Pancreas (tissue), 10 donors: ENCODE measurements at regions of chr12 and their contacts with region 1.

Region 1: DNA sequence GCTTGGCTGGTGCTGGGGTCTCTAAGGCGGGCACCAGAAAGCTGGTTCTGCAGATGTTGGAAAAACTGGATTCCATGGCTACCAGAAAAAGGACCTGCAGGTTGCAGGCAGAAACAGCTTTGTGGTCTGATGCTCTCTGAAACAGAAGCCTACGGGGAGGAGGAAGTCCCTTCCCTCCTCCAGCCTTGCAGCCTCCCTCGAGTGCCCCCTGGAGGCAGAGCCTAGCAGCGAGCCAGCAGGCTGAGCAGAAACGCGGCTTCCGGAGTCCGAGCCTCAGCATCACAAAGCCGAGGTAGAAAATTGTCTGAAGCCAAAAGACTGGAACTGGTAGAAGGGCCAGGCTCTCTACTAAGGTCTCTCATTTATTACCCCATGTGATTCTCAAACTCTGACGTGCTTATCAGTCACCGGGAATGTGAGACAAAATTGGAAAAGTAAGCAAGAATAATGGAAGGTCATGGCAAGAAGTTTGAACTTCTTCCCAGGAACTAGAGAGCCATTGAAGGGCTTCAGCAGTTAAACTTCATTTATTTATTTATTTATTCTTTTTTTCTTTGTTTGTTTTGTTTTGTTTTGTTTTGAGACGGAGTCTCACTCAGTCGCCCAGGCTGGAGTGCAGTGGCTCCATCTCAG is 82.2 kb upstream of the CPSF6 start:
- DNase-seq: peak; percentile 81 to 97 (median 90)
- ATAC-seq: peak; percentile 85 to 98 (median 97)
- H3K4me3 ChIP-seq: no peak overlapping the region
- H3K27ac ChIP-seq: no peak overlapping the region
- H3K4me1 ChIP-seq: peaks cover 0 to 8% (median 0%) of the 10 kb centered on the region in 3 donors
- H3K27me3 ChIP-seq: no peaks in the 10 kb centered on the region
- CTCF ChIP-seq: peak; percentile 84 to 97 (median 91)

Region 2: DNA sequence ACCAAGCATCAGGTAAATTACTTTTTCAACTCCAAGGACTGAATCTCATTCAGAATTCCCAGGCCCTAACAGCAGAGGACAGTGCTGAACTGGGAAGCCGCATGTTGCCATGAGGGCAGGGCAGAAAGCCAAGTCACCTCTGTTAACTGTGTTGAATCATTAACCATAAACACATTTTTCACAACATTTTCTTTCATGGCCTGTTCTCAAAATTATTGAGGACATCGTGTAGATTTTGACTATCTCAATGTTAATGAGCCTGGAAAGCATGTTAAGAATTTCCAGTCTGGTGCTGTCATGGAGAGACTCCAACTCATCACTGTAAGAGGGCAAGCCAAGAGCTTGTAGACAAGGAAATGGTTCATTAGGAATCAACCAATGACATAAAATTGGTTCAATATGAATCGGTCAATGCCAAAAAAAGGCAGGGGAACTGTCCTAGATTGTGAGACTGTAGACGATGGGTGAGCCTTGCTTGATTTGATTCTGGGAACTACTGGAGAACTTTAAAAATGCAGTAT is 257.8 kb before region 1 on chr12:
- intact Hi-C with region 1: loop called in 1 of 3 experiments (anchors 10 kb)
- DNase-seq: peak; percentile 69 to 84 (median 79)
- ATAC-seq: peak; percentile 93 to 94 (median 94)
- H3K4me3 ChIP-seq: no peak overlapping the region
- H3K27ac ChIP-seq: peak overlapping the region in 2 of 4 donors; percentile 1 to 37
- H3K4me1 ChIP-seq: peaks cover 13 to 22% (median 18%) of the 10 kb centered on the region in 3 donors
- H3K27me3 ChIP-seq: no peaks in the 10 kb centered on the region
- CTCF ChIP-seq: peak in 3 of 4 donors; percentile 21 to 74 (median 61)

Region 3: DNA sequence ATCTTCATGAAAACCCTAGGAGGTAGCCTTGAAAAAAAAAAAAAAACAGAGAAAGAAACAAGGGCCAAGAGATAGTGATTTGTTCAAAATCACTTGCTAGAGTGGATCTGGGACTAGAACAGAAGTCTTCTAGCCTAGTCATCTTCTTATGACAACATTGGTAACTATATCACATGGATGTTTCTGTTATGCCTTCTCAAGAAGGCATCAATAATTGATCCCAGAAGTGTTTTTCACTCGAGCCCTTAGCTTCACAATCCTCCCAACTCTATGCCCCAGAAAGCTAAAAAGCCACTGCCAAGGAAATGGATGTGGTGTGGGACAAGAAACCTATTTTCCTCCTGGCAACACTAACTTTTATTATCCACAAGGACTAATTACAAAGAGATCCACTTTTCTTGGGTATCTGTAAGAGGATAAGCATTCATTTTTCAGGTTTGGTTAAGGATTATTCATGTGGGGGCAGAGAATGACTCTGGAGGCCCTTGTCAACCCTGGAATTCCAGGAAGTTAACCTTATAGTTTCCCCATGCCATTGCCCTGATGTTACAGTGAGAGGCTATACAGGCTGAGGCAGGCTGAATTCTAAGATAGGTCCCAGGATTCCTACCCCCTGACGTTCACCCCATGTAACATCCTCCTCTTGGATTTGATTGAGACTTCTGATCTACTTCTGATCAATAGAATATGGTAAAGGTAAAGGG is 156.4 kb before region 1 on chr12:
- intact Hi-C with region 1: no loop called
- DNase-seq: no peak
- ATAC-seq: no peak
- H3K4me3 ChIP-seq: no peak overlapping the region
- H3K27ac ChIP-seq: no peak overlapping the region
- H3K4me1 ChIP-seq: no peaks in the 10 kb centered on the region
- H3K27me3 ChIP-seq: no peaks in the 10 kb centered on the region
- CTCF ChIP-seq: no peak

Region 4: GRCh38 chr12:69239352-69239921 is 82.3 kb after region 1 on chr12 and contains the start of gene CPSF6:
- intact Hi-C with region 1: no loop called
- DNase-seq: peak; percentile 95 to 98 (median 97)
- ATAC-seq: peak; percentile 98 to 99 (median 98)
- H3K4me3 ChIP-seq: peak within 1 kb of the TSS; percentile 60 to 96 (median 83)
- H3K27ac ChIP-seq: peak within 1 kb of the TSS; percentile 82 to 95 (median 90)
- H3K4me1 ChIP-seq: peaks cover 6 to 26% (median 22%) of the 10 kb centered on the region in 3 donors
- H3K27me3 ChIP-seq: no peaks in the 10 kb centered on the region
- CTCF ChIP-seq: no peak
- total RNA-seq, gene CPSF6: 20.4 to 34.2 (median 28.8) TPM

Region 5: GRCh38 chr12:69254046-69254445 is 96.9 kb after region 1 on chr12:
- intact Hi-C with region 1: loop called in 1 of 3 experiments (anchors 10 kb)
- DNase-seq: no peak
- ATAC-seq: peak in 3 of 4 donors; percentile 70 to 86 (median 81)
- H3K4me3 ChIP-seq: no peak overlapping the region
- H3K27ac ChIP-seq: no peak overlapping the region
- H3K4me1 ChIP-seq: no peaks in the 10 kb centered on the region
- H3K27me3 ChIP-seq: no peaks in the 10 kb centered on the region
- CTCF ChIP-seq: peak; percentile 35 to 48 (median 42)

Region 6: DNA sequence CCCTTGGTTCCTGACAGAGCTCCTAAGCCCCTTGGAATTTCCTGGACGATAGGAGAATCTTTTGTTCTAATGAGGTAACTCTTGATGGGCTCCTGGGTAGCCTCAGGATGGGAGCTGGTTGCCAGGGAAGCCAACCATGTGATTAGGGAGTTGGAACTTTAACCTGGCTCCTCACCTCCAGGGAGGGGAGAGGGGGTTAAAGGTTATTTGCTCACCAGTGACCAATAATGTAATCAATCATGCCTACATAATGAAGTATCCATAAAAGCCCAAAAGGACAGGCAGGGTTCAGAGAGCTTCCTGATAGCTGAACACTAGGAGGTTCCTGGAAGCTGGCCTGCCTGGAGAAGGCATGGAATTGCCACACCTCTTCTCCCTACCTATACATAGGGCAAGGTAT is 1079.9 kb after region 1 on chr12:
- intact Hi-C with region 1: no loop called
- DNase-seq: no peak
- ATAC-seq: no peak
- H3K4me3 ChIP-seq: no peak overlapping the region
- H3K27ac ChIP-seq: no peak overlapping the region
- H3K4me1 ChIP-seq: peaks cover 0 to 4% (median 4%) of the 10 kb centered on the region in 3 donors
- H3K27me3 ChIP-seq: no peaks in the 10 kb centered on the region
- CTCF ChIP-seq: no peak